PC-3 (cell line): ENCODE measurements at regions of chr7 and their contacts with region 1.

Region 1: GRCh38 chr7:108525985-108526767 is at the start of gene PNPLA8:
- DNase-seq: peak; percentile 98
- ATAC-seq: peak; percentile 82
- H3K4me3 ChIP-seq: peak within 1 kb of the TSS; percentile 92
- H3K27ac ChIP-seq: peak within 1 kb of the TSS; percentile 88
- H3K4me1 ChIP-seq: peaks cover 45% of the 10 kb centered on the region
- H3K27me3 ChIP-seq: no peaks in the 10 kb centered on the region
- CTCF ChIP-seq: no peak
- total RNA-seq, gene PNPLA8: 14.6 and 19.5 TPM in 2 replicates

Region 2: DNA sequence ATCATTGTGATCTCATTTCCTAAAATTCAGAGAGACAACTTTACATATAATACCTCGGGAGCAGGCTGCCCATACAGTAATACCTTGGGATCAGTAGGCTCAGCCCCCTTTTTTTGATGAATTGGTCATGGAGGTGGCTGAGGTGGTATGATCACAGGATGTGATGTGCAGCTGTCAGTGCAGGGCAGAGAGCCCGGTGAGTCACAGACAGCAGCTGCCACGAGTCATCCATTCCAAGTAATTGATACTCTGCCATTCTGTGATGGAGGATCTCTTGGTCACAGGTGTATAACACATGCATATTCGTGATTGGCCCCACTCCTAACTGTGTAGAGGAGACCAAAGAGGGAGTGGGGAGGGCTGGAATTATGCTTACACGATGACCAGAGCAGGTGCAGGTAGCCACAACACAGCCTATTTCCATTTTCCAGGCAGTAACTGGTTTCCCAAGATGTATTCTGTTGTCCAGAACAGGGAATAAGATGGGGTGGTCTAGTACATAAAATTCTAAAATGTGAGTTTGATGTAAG is 84.1 kb before region 1 on chr7:
- CTCF ChIA-PET with region 1: no interaction called
- POLR2A ChIA-PET with region 1: no interaction called
- intact Hi-C with region 1: no loop called
- DNase-seq: peak; percentile 66
- ATAC-seq: peak; percentile 38
- H3K4me3 ChIP-seq: no peak overlapping the region
- H3K27ac ChIP-seq: no peak overlapping the region
- H3K4me1 ChIP-seq: 0 out of 2 replicates have a peak, but pooled peaks cover 3% of the 10 kb centered on the region
- H3K27me3 ChIP-seq: peaks cover 29% of the 10 kb centered on the region
- CTCF ChIP-seq: no peak

Region 3: GRCh38 chr7:108497082-108497725 is 29.0 kb before region 1 on chr7:
- CTCF ChIA-PET with region 1: interaction called, 11 read pairs
- POLR2A ChIA-PET with region 1: no interaction called
- intact Hi-C with region 1: no loop called
- DNase-seq: peak; percentile 74
- ATAC-seq: peak; percentile 60
- H3K4me3 ChIP-seq: no peak overlapping the region
- H3K27ac ChIP-seq: no peak overlapping the region
- H3K4me1 ChIP-seq: peaks cover 4% of the 10 kb centered on the region; the same call in 1 of the 2 replicates
- H3K27me3 ChIP-seq: no peaks in the 10 kb centered on the region
- CTCF ChIP-seq: peak; percentile 84

Region 4: DNA sequence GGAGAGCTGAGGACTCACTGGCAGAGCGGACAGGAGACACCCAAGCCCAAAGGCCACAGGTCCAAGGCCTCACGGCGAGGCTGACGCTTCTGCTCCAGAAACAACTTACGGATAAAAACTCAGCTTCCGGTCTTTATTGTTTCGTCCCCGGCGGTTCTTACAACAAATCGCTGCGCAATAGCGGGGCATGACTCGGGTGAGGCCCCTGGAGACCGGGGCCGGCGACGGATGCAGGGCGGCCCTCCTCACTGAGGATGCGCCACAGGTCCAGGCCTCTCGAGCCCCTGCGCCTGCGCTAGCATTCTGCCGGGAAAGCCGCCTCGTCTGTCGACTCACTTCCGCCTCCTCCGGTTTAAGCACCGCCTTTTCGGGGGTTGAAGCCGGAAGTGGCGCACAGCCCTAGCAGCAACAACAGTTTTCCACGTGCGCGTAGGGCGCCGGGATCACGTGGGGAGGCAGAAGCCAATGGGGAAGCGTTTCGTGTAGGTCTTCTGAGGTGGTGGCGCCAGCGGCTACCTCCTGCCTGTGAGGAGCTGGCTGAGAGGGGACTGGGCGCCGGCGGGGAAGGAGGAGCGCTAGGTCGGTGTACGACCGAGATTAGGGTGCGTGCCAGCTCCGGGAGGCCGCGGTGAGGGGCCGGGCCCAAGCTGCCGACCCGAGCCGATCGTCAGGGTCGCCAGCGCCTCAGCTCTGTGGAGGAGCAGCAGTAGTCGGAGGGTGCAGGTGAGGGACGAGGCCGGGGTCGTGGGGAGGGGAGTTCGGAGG is 43.4 kb after region 1 on chr7 and contains the starts of genes DNAJB9 and THAP5:
- CTCF ChIA-PET with region 1: no interaction called
- POLR2A ChIA-PET with region 1: interaction called, 6 read pairs
- intact Hi-C with region 1: loop called (anchors 1 kb)
- DNase-seq: peak; percentile 98
- ATAC-seq: peak; percentile 94
- H3K4me3 ChIP-seq: peak within 1 kb of the TSS; percentile 73
- H3K27ac ChIP-seq: peak within 1 kb of the TSS; percentile 71
- H3K4me1 ChIP-seq: peaks cover 17% of the 10 kb centered on the region
- H3K27me3 ChIP-seq: no peaks in the 10 kb centered on the region
- CTCF ChIP-seq: no peak
- total RNA-seq, gene DNAJB9: 19.2 and 24.0 TPM in 2 replicates
- total RNA-seq, gene THAP5: 8.1 and 11.8 TPM in 2 replicates